ENCODE measurements at regions of chr18 and their contacts with region 1.

Region 1: DNA sequence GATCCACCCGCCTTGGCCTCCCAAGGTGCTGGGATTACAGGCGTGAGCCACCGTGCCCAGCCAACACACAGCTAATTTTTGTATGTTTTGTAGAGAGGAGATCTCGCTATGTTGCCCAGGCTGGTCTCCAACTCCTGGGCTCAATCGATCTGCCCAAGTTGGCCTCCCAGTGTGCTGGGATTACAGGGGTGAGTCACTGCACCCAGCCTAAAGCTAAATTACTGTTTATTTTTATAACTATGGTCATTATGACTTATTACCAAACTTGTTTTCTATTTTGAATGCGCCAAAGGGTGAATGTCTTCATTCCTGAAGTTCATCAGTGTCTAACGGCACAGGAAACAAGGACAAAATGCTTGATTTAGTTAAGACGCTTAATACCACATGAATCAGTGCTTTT is 38.9 kb upstream of the GREB1L start:
- DNase-seq: peak; percentile 9
- H3K4me3 ChIP-seq: no peak overlapping the region
- H3K27ac ChIP-seq: no peak overlapping the region
- H3K4me1 ChIP-seq: no peaks in the 10 kb centered on the region
- H3K27me3 ChIP-seq: peaks cover 2% of the 10 kb centered on the region
- CTCF ChIP-seq: no peak

Region 2: GRCh38 chr18:21361307-21361880 is 158.3 kb after region 1 on chr18:
- CTCF ChIA-PET with region 1: no interaction called
- dilution Hi-C with region 1: no loop called
- in situ Hi-C with region 1: loop called in 1 of 2 experiments (anchors 10 kb)
- intact Hi-C with region 1: no loop called
- DNase-seq: no peak
- H3K4me3 ChIP-seq: no peak overlapping the region
- H3K27ac ChIP-seq: no peak overlapping the region
- H3K4me1 ChIP-seq: no peaks in the 10 kb centered on the region
- H3K27me3 ChIP-seq: peaks cover 2% of the 10 kb centered on the region
- CTCF ChIP-seq: no peak

Region 3: GRCh38 chr18:21444465-21445023 is 241.4 kb after region 1 on chr18:
- CTCF ChIA-PET with region 1: no interaction called
- dilution Hi-C with region 1: no loop called
- in situ Hi-C with region 1: loop called in 1 of 2 experiments (anchors 5 kb)
- intact Hi-C with region 1: no loop called
- DNase-seq: peak; percentile 48
- H3K4me3 ChIP-seq: no peak overlapping the region
- H3K27ac ChIP-seq: no peak overlapping the region
- H3K4me1 ChIP-seq: peaks cover 3% of the 10 kb centered on the region
- H3K27me3 ChIP-seq: no peaks in the 10 kb centered on the region
- CTCF ChIP-seq: peak; percentile 81 to 87

Region 4: GRCh38 chr18:21452796-21453510 is 249.9 kb after region 1 on chr18:
- CTCF ChIA-PET with region 1: no interaction called
- dilution Hi-C with region 1: loop called (anchors 10 kb)
- in situ Hi-C with region 1: loop called in 1 of 2 experiments (anchors 5 kb)
- intact Hi-C with region 1: no loop called
- DNase-seq: no peak
- H3K4me3 ChIP-seq: no peak overlapping the region
- H3K27ac ChIP-seq: no peak overlapping the region
- H3K4me1 ChIP-seq: no peaks in the 10 kb centered on the region
- H3K27me3 ChIP-seq: no peaks in the 10 kb centered on the region
- CTCF ChIP-seq: no peak

Region 5: DNA sequence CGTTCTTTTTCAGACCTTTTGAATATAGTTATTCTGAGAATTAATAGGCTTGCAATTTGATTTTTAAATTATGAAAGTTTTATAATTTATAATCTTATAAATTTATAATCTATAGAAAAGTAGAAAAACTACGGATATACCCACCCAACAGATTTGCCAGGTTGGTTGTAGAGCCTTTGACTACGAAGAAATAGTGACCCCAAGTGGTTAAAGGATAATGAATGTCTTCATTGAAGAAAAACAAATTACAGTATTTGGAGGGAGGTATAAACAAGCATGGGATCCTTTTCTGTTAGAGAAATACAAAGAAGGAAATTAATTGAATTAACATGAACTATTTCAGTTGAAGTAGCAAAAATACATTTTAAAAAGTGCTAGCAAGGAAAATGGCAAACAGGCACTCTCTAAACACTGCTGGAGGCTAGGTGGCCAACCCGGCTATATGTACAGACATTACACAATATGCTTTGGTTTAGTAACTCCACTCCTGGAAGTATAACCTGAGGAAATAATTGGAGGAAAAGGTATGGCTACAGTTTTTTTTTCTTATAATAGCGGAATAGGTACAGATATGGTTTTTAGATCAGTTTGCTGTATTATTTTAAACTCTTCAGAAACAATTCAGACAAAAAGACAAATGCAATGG is 648.4 kb after region 1 on chr18:
- CTCF ChIA-PET with region 1: no interaction called
- dilution Hi-C with region 1: no loop called
- in situ Hi-C with region 1: no loop called
- intact Hi-C with region 1: loop called (anchors 10 kb)
- DNase-seq: no peak
- H3K4me3 ChIP-seq: no peak overlapping the region
- H3K27ac ChIP-seq: no peak overlapping the region
- H3K4me1 ChIP-seq: no peaks in the 10 kb centered on the region
- H3K27me3 ChIP-seq: no peaks in the 10 kb centered on the region
- CTCF ChIP-seq: peak in 1 of 2 donors; percentile 41

Measured in mammary epithelial cell (primary cell).